ENCODE measurements at regions of chr14 and their contacts with region 1.

Region 1: GRCh38 chr14:101964297-101965144 is at the start of gene DYNC1H1:
- DNase-seq: peak; percentile 94
- ATAC-seq: peak; percentile 90
- H3K4me3 ChIP-seq: peak within 1 kb of the TSS; percentile 46 to 97 (median 93)
- H3K4me3 Mint-ChIP-seq: peak within 1 kb of the TSS; percentile 96
- H3K27ac ChIP-seq: peak within 1 kb of the TSS; percentile 72 to 82
- H3K27ac Mint-ChIP-seq: peak within 1 kb of the TSS; percentile 94
- H3K4me1 ChIP-seq: peaks cover 12 to 22% of the 10 kb centered on the region in 2 donors
- H3K4me1 Mint-ChIP-seq: peaks cover 42% of the 10 kb centered on the region
- H3K27me3 ChIP-seq: no peaks in the 10 kb centered on the region
- H3K27me3 Mint-ChIP-seq: no peaks in the 10 kb centered on the region
- CTCF ChIP-seq: no peak
- total RNA-seq, gene DYNC1H1: 257 TPM in 2 replicates

Region 2: DNA sequence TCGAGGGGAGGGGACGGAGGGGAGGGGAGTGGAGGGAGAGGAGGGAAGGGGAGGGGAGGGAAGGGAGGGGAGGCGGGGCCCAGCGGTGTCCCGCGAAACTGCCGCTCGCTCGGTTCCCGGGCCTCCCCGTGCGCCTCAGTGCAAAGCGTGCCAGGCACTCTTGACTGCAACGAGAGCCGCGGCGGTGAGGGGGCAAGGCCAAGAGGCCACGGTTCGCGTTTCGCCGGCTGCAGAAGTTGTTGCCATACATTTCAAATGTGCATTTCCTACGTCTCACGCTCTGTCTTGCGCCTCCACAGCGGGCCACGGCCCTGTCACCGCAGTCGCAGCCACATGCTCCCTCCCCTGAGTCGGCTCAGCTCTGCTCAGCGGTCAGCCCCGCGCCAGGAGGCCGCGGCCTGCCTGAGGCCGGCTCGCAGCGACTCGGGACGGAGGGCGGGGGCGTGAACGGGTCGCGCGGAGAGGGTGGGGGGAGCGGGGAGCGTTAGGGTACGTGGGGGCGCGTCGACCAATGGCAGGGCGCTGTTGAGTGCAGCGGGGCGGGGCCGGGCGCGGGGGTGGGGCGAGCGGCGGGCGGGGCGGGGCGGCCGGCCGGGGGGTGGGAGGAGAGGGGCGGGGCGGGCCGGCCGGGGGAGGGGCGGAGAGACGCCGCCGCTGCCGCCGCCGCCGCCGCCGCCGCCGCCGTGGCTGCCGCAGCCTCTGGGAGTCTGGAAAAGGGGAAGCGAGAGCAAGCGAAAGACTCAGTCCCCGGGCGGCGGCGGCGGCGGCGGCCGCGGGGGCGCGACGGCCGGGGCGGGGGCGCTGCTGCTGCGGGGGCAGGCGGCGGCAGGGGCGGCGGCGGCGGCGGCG is 203.3 kb before region 1 on chr14 and contains the start of gene PPP2R5C:
- CTCF ChIA-PET with region 1: interaction called, 6 read pairs
- POLR2A ChIA-PET with region 1: interaction called, 4 read pairs
- intact Hi-C with region 1: loop called (anchors 1 kb)
- DNase-seq: peak; percentile 93
- ATAC-seq: peak; percentile 63
- H3K4me3 ChIP-seq: peak within 1 kb of the TSS; percentile 73 to 96 (median 87)
- H3K4me3 Mint-ChIP-seq: peak within 1 kb of the TSS; percentile 94
- H3K27ac ChIP-seq: peak within 1 kb of the TSS; percentile 66 to 78
- H3K27ac Mint-ChIP-seq: peak within 1 kb of the TSS; percentile 92
- H3K4me1 ChIP-seq: peaks cover 11 to 12% of the 10 kb centered on the region in 2 donors
- H3K4me1 Mint-ChIP-seq: peaks cover 14% of the 10 kb centered on the region
- H3K27me3 ChIP-seq: no peaks in the 10 kb centered on the region
- H3K27me3 Mint-ChIP-seq: no peaks in the 10 kb centered on the region
- CTCF ChIP-seq: no peak
- total RNA-seq, gene PPP2R5C: 330 and 337 TPM in 2 replicates

Region 3: DNA sequence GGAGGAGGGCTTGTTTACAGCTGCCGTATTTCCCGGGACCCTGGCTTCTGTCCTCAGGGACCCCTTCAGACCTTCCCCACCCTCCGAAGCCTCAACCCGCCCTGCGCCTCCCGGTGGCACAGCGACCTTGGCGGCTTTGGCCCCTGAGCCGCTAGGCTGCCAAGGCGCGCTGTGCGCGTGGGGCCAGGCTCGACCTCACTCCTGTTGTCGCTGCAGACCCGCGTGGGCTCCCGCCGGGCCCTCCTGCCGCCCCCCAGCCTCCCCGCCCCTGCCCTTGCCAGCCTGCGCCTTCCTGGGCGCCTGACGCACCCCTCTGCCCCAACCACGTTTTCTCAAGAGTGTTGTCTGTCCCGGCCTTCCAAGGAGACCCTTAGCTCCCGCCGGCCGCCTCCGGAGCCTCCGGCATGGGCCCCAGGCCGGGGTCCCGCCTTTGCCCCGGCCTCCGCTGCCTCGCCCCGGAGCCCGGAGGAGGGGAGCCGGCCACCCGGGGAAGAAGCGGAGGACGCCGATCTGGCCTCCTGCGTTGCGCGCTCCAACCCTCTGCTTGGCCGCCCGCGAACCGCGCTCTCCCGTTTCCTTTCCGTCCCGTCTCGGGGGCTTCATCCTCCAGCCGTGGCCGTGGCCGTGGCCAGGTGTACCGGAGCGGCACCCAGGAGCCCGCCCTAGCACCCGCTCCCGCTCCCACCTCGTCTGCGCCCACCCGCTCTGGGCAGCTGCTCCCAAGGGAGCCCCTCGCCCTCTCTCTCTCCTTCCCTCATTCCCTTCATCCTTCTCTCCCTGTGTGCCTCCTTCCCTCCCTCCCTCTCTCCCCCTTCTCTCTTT is 183.1 kb before region 1 on chr14:
- CTCF ChIA-PET with region 1: no interaction called
- POLR2A ChIA-PET with region 1: no interaction called
- intact Hi-C with region 1: no loop called
- DNase-seq: peak; percentile 46
- ATAC-seq: peak; percentile 58
- H3K4me3 ChIP-seq: peak overlapping the region in 4 of 5 experiments; percentile 35 to 67 (median 60)
- H3K4me3 Mint-ChIP-seq: peak overlapping the region; percentile 79
- H3K27ac ChIP-seq: no peak overlapping the region
- H3K27ac Mint-ChIP-seq: peak overlapping the region; percentile 15
- H3K4me1 ChIP-seq: peaks cover 18 to 25% of the 10 kb centered on the region in 2 donors
- H3K4me1 Mint-ChIP-seq: peaks cover 39% of the 10 kb centered on the region
- H3K27me3 ChIP-seq: peaks cover 0 to 5% (median 2%) of the 10 kb centered on the region in 4 experiments
- H3K27me3 Mint-ChIP-seq: no peaks in the 10 kb centered on the region
- CTCF ChIP-seq: no peak

Region 4: DNA sequence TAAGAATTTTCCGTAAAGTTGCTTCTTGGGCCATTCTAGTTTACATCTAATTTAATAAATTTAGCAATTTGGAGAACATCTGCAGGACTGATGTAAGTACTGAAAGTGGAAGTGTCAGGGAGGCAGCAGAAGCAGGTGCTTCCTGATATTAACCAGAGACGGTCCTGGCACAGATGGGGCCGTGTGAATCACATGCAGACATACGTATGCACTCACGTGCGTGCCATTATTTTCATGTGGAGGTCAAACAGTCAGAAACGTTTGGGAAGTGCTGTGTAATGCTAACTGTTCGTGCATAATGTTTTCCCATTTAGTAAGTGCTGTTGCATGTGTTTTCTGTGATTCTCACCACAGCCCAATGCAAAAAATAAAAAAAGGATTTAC is 88.0 kb before region 1 on chr14:
- CTCF ChIA-PET with region 1: no interaction called
- POLR2A ChIA-PET with region 1: no interaction called
- intact Hi-C with region 1: loop called (anchors 1 kb)
- DNase-seq: peak; percentile 96
- ATAC-seq: peak; percentile 89
- H3K4me3 ChIP-seq: peak overlapping the region in 4 of 5 experiments; percentile 8 to 57 (median 29)
- H3K4me3 Mint-ChIP-seq: peak overlapping the region; percentile 71
- H3K27ac ChIP-seq: peak overlapping the region; percentile 94 to 96
- H3K27ac Mint-ChIP-seq: peak overlapping the region; percentile 72
- H3K4me1 ChIP-seq: peaks cover 52 to 58% of the 10 kb centered on the region in 2 donors
- H3K4me1 Mint-ChIP-seq: peaks cover 79% of the 10 kb centered on the region
- H3K27me3 ChIP-seq: no peaks in the 10 kb centered on the region
- H3K27me3 Mint-ChIP-seq: no peaks in the 10 kb centered on the region
- CTCF ChIP-seq: no peak

Region 5: GRCh38 chr14:101992708-101993107 is 28.2 kb after region 1 on chr14:
- CTCF ChIA-PET with region 1: interaction called, 29 read pairs
- POLR2A ChIA-PET with region 1: no interaction called
- intact Hi-C with region 1: loop called (anchors 1 kb)
- DNase-seq: peak; percentile 72
- ATAC-seq: peak; percentile 92
- H3K4me3 ChIP-seq: no peak overlapping the region
- H3K4me3 Mint-ChIP-seq: no peak overlapping the region
- H3K27ac ChIP-seq: peak overlapping the region in 1 of 2 donors; percentile 34
- H3K27ac Mint-ChIP-seq: peak overlapping the region; percentile 66
- H3K4me1 ChIP-seq: peaks cover 11% of the 10 kb centered on the region in 2 donors
- H3K4me1 Mint-ChIP-seq: peaks cover 17% of the 10 kb centered on the region
- H3K27me3 ChIP-seq: no peaks in the 10 kb centered on the region
- H3K27me3 Mint-ChIP-seq: no peaks in the 10 kb centered on the region
- CTCF ChIP-seq: peak; percentile 21

Region 6: DNA sequence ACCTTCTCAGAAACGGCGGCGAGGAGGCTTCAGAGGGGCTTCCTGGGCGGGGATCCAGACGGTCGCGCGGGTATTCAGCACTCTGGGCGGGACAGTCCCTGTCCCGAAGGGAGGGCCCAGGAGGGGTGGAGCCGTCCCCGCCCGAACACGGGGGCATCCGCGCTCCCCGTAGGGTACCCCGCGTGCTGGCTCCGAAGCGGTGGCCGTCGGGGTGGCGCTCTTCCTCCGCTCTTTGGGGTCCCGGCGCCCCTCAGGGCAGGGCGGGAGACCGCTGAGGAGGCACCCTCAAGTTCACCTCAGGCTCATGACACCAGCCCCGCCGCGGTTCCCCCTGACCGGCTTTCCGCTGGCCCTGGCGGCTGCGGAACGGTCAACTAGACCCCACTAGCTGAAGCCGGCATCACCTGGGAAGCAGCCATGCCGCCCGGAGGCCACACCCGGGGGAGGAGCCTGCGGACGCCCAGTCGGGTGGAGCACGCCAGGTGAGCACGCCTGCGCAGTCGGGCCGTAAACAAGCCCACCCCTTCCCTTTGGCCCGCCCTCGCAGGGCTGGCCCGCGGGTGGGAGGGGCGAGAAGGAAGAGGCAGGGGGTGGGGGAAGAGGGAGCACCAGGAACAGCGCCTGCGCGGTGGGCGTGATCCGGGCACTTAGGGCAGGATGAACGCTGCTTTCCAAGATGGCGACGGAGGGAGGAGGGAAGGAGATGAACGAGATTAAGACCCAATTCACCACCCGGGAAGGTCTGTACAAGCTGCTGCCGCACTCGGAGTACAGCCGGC is 174.9 kb after region 1 on chr14 and contains the start of gene WDR20:
- CTCF ChIA-PET with region 1: no interaction called
- POLR2A ChIA-PET with region 1: no interaction called
- intact Hi-C with region 1: loop called (anchors 1 kb)
- DNase-seq: peak; percentile 98
- ATAC-seq: peak; percentile 93
- H3K4me3 ChIP-seq: peak within 1 kb of the TSS; percentile 66 to 94 (median 88)
- H3K4me3 Mint-ChIP-seq: peak within 1 kb of the TSS; percentile 89
- H3K27ac ChIP-seq: peak within 1 kb of the TSS; percentile 88 to 90
- H3K27ac Mint-ChIP-seq: peak within 1 kb of the TSS; percentile 94
- H3K4me1 ChIP-seq: peaks cover 14 to 16% of the 10 kb centered on the region in 2 donors
- H3K4me1 Mint-ChIP-seq: peaks cover 24% of the 10 kb centered on the region
- H3K27me3 ChIP-seq: no peaks in the 10 kb centered on the region
- H3K27me3 Mint-ChIP-seq: no peaks in the 10 kb centered on the region
- CTCF ChIP-seq: no peak
- total RNA-seq, gene WDR20: 62.8 and 64.0 TPM in 2 replicates

Region 7: DNA sequence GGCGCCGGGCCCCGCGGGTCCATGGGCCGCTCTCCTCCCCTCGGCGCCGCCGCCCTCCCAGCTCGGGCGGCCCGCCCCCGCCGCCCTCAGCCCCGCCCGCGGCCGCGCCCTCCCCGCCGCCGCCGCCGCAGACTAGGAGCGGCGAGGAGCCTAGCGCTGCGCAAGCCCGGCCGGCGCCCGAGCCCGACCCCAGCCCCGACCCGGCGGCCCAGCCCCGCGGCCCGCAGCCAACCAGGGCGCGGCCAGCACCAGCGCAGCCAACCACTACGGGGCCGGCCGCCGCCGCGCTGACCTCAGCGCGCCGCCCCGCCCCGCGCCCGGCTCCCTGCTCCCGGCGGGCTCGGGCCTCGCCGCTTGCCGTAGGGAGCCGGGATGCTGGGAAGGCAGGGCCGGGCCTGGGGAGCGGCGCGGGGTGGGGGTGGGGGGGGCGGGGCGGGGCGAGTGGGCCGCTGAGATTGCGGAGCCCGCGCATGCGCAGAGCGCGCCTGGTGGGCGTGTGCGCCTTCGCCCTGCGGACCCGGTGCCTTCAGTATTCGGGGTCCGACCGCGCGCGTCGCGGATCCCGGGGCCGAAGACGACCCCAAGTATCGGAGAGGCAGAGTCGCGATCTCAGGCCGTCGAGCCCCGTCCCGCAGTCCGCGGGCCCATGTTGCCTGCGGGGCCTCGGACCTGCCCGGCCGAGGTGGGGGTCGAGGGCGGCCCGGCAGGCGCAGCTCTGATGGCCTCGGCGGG is 1093.0 kb after region 1 on chr14 and contains the start of gene CDC42BPB:
- CTCF ChIA-PET with region 1: no interaction called
- POLR2A ChIA-PET with region 1: no interaction called
- intact Hi-C with region 1: loop called (anchors 5 kb)
- DNase-seq: peak; percentile 88
- ATAC-seq: peak; percentile 87
- H3K4me3 ChIP-seq: peak within 1 kb of the TSS; percentile 26 to 73 (median 67)
- H3K4me3 Mint-ChIP-seq: peak within 1 kb of the TSS; percentile 85
- H3K27ac ChIP-seq: no peak within 1 kb of the TSS
- H3K27ac Mint-ChIP-seq: peak within 1 kb of the TSS; percentile 71
- H3K4me1 ChIP-seq: peaks cover 16 to 19% of the 10 kb centered on the region in 2 donors
- H3K4me1 Mint-ChIP-seq: peaks cover 31% of the 10 kb centered on the region
- H3K27me3 ChIP-seq: peaks cover 0 to 7% (median 0%) of the 10 kb centered on the region in 4 experiments
- H3K27me3 Mint-ChIP-seq: no peaks in the 10 kb centered on the region
- CTCF ChIP-seq: no peak
- total RNA-seq, gene CDC42BPB: 52.5 and 59.2 TPM in 2 replicates